Panc1 (cell line): ENCODE measurements at regions of chr1 and their contacts with region 1.

Region 1: DNA sequence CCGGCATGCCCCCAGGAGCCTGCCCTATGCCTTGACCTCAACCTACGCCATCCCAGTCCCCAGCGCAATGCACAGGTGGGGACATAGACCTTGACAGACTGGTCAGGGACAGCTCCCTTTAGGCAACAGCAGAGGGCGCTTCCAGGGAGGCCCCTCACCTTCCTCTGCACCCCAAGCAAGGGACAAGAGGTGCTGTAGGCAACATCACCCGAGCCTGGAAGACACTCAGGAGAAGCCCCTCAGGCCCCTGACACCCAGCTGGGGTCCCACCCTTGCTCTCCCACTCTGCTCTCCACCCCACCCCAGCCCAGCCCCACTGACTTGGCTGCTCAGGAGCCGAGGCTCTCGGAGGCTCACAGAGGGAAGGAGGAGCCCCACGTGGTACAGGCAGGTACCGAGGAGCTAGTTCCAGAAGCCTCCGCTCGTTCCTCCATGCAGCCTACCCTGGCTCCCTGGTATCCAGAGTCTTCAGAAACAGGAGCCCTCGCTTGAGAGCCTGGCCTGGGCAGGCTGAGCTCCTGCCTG is 2.4 kb upstream of the WNT3A start:
- DNase-seq: peak; percentile 12
- ATAC-seq: peak; percentile 76
- H3K4me3 ChIP-seq: no peak overlapping the region
- H3K27ac ChIP-seq: no peak overlapping the region
- H3K4me1 ChIP-seq: no peaks in the 10 kb centered on the region; the same call in 1 of the 2 replicates
- H3K27me3 ChIP-seq: peaks cover 15% of the 10 kb centered on the region; the same call in 1 of the 2 replicates
- CTCF ChIP-seq: peak; percentile 84

Region 2: GRCh38 chr1:227869851-227870305 is 134.5 kb before region 1 on chr1:
- CTCF ChIA-PET with region 1: no interaction called
- POLR2A ChIA-PET with region 1: no interaction called
- in situ Hi-C with region 1: no loop called
- intact Hi-C with region 1: no loop called
- DNase-seq: no peak
- ATAC-seq: no peak
- H3K4me3 ChIP-seq: no peak overlapping the region
- H3K27ac ChIP-seq: no peak overlapping the region
- H3K4me1 ChIP-seq: no peaks in the 10 kb centered on the region
- H3K27me3 ChIP-seq: no peaks in the 10 kb centered on the region
- CTCF ChIP-seq: no peak

Region 3: DNA sequence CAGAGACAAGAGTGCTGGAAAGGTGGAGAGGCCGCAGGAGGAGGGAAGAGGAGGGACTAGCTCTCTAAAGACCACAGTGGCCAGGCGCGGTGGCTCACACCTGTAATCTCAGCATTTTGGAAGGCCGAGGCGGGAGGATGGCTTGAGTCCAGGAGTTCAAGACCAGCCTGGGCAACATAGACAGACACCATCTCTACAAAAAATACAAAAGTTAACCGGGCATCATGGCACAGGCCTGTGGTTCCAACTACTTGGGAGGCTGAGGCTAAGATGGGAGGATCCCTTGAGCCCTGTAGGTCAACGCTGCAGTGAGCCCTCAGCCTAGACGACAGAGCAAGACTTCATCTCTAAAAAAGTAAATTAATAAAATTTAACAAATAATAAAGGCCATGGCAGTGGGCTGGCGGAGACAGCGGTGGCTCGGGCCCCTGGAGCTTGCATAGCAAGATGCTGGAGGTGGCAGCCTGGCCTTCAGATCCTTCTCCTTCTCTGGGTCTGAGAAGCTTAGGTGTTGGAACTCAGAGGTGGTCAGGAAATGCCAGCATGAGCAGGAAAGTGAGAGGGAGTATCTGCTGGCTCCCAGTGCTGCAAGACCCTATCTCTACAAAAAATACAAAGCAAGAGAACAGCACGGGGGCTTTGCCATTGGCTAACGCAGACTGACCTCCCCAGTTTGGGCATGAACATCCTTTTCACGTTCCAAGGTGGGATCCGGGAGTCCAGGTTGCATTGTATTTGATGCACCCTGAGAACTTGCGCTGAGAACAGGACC is 13.1 kb after region 1 on chr1:
- CTCF ChIA-PET with region 1: no interaction called
- POLR2A ChIA-PET with region 1: interaction called, 16 read pairs
- in situ Hi-C with region 1: no loop called
- intact Hi-C with region 1: no loop called
- DNase-seq: no peak
- ATAC-seq: no peak
- H3K4me3 ChIP-seq: no peak overlapping the region
- H3K27ac ChIP-seq: no peak overlapping the region
- H3K4me1 ChIP-seq: no peaks in the 10 kb centered on the region
- H3K27me3 ChIP-seq: no peaks in the 10 kb centered on the region
- CTCF ChIP-seq: no peak

Region 4: DNA sequence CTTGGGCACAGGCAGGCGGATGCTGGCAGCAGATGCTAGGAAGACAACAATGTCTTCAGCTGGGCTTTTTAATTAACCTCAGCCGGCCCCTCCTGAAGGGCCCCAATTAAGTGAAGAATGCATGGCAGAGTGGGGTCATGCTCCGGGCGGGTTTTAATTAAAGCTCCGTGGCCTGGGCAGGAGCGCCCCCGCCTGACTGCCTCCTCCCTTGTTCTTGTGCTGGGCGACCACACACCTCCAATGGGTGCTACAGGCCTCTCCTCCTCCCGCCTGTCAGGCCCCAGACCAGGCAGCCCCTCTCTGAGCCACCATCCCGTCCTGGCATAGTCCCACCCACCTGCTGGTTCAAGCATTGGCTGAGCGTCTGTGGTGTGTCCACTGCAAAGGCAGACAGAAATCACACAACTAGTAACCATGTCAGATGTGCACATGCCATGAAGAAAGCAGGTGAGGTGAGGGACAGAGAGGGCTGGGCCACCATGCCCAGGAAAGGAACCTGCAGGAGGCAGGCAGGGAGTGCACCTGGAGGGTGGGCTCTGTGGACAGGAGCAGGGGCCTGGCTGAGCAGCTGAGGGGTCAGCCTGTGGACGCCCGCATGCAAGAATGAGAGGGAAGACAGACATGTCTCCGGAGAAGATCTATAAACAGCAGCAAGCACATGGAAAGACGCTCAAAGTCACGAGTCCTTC is 69.6 kb after region 1 on chr1:
- CTCF ChIA-PET with region 1: interaction called, 7 read pairs
- POLR2A ChIA-PET with region 1: no interaction called
- in situ Hi-C with region 1: no loop called
- intact Hi-C with region 1: loop called (anchors 2 kb)
- DNase-seq: no peak
- ATAC-seq: peak; percentile 56
- H3K4me3 ChIP-seq: no peak overlapping the region
- H3K27ac ChIP-seq: no peak overlapping the region
- H3K4me1 ChIP-seq: no peaks in the 10 kb centered on the region
- H3K27me3 ChIP-seq: no peaks in the 10 kb centered on the region
- CTCF ChIP-seq: no peak; the same call in 1 of the 2 replicates

Region 5: DNA sequence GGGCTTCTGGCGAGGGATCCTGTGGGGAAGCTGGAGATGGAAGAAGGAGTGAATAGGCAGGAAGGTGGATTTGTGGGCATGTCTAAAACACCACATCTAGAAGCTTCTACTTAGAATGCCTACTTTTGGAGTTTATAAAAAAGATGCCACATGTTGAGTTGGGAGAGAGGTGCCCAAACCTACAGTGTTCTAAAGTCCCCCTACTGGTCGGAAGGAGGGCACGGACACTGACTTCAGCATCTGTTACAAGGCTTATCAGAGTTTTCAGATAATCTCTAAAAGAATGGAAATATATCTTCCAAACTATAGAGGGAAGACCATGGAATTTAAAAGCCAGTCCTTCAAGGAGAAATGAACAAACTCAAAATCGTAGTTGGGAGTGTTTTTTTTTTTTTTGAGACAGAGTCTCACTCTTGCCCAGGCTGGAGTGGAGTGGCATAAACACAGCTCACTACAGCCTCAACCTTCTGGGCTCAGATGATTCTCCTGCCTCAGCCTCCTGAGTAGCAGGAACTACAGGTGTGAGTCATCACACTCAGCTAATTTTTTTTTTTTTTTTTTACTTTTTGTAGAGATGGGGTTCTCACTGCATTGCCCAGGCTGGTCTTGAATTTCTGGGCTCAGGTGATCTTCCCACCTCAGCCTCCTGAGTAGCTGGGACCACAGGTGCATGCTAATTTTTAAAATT is 176.0 kb after region 1 on chr1:
- CTCF ChIA-PET with region 1: no interaction called
- POLR2A ChIA-PET with region 1: no interaction called
- in situ Hi-C with region 1: no loop called
- intact Hi-C with region 1: no loop called
- DNase-seq: no peak
- ATAC-seq: no peak
- H3K4me3 ChIP-seq: no peak overlapping the region
- H3K27ac ChIP-seq: no peak overlapping the region
- H3K4me1 ChIP-seq: no peaks in the 10 kb centered on the region
- H3K27me3 ChIP-seq: no peaks in the 10 kb centered on the region
- CTCF ChIP-seq: no peak; the same call in 1 of the 2 replicates

Region 6: DNA sequence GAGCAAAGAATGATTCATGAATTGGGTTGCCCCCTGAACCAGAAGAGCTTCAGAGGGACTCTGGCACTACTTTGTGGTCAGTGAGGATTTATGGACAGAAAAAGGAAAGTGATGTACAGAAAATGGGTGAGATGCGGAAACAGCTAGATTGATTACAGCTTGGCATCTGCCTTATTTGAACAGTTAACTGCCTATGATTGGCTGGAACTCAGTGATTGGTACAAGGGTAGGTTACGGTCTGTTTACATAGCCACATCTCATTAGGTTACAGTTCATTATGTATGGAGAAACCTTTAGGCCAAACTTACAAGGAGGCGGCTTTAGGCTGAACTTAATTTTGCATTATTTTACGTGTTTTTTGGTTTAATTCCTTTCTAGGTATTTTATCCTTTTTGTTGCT is 701.9 kb after region 1 on chr1:
- CTCF ChIA-PET with region 1: no interaction called
- POLR2A ChIA-PET with region 1: no interaction called
- in situ Hi-C with region 1: no loop called
- intact Hi-C with region 1: no loop called
- DNase-seq: no peak
- ATAC-seq: no peak
- H3K4me3 ChIP-seq: no peak overlapping the region
- H3K27ac ChIP-seq: no peak overlapping the region
- H3K4me1 ChIP-seq: no peaks in the 10 kb centered on the region
- H3K27me3 ChIP-seq: no peaks in the 10 kb centered on the region
- CTCF ChIP-seq: no peak